Activated T-helper 2 cell treated with anti-CD3 and anti-CD28 coated beads, Interferon-gamma antibody, Interleukin-2, Interleukin-4, amounts not matched to agents 10 μg/mL and 5 μg/mL and 100 μg/mL, durations not matched to agents 14 hours and 24 hours and 36 hours (primary cell): ENCODE measurements at regions of chr14 and their contacts with region 1.

Region 1: GRCh38 chr14:72049455-72049854 is 117.2 kb downstream of the RGS6 start:
- DNase-seq: peak; percentile 48
- H3K4me3 Mint-ChIP-seq: no peak overlapping the region
- H3K27ac Mint-ChIP-seq: peak overlapping the region; percentile 72
- H3K4me1 Mint-ChIP-seq: peaks cover 34% of the 10 kb centered on the region
- H3K27me3 Mint-ChIP-seq: peaks cover 15% of the 10 kb centered on the region

Region 2: GRCh38 chr14:71932220-71932981 is 117.1 kb before region 1 on chr14 and contains the start of gene RGS6:
- intact Hi-C with region 1: loop called (anchors 2 kb)
- DNase-seq: peak; percentile 10
- H3K4me3 Mint-ChIP-seq: peak within 1 kb of the TSS; percentile 74
- H3K27ac Mint-ChIP-seq: peak within 1 kb of the TSS; percentile 80
- H3K4me1 Mint-ChIP-seq: peaks cover 15% of the 10 kb centered on the region
- H3K27me3 Mint-ChIP-seq: peaks cover 55% of the 10 kb centered on the region
- total RNA-seq, gene RGS6: 2.8 and 3.7 TPM in 2 replicates

Region 3: GRCh38 chr14:72000907-72001306 is 48.5 kb before region 1 on chr14:
- intact Hi-C with region 1: loop called (anchors 2 kb)
- DNase-seq: no peak
- H3K4me3 Mint-ChIP-seq: no peak overlapping the region
- H3K27ac Mint-ChIP-seq: no peak overlapping the region
- H3K4me1 Mint-ChIP-seq: peaks cover 1% of the 10 kb centered on the region
- H3K27me3 Mint-ChIP-seq: peaks cover 2% of the 10 kb centered on the region

Region 4: GRCh38 chr14:72063761-72064282 is 14.4 kb after region 1 on chr14:
- intact Hi-C with region 1: loop called (anchors 1 kb)
- DNase-seq: no peak
- H3K4me3 Mint-ChIP-seq: peak overlapping the region; percentile 4
- H3K27ac Mint-ChIP-seq: peak overlapping the region; percentile 29
- H3K4me1 Mint-ChIP-seq: peaks cover 20% of the 10 kb centered on the region
- H3K27me3 Mint-ChIP-seq: peaks cover 20% of the 10 kb centered on the region

Region 5: DNA sequence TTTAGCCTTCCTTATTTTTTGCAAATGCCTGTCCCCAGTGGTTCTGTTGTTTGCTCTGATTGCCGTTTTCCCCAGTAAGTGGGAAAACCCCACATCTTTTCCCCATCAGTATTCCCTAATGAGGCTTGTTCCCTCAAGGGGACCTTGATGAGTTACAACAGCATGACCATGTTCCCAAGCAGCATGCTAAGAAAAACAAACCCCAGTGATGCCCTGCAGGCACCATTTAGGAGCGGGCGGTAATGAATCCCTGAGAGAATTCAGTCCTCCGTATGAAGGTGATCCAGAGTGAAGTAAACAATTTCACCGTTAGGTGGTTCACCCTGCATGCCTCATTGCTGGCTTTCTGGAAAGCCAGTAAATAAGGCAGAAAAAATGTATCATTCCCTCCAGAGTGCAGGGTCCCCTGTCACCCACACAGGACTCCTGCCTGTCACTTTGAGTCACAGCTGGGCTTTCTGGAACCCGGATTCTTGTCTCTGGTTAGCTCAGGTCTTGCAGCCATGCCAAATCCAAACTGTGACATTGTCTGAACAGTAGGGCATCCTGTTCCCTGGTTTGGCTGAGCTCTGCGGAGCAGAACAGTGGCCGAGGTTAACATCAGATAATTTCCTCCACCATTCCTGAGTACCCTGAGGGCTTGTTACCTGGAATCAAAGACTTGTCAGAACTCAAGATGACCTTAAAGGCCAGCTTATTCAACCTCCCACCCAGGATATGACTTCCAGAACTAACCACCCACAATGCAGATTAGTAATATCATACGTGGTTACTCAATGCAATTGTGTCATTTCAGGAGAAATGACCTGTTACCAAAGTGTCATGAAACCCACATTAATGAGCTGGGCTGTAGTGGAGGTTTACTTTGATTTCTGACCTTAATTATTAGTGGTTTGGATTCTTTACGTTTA is 105.5 kb after region 1 on chr14:
- intact Hi-C with region 1: loop called (anchors 2 kb)
- DNase-seq: no peak
- H3K4me3 Mint-ChIP-seq: no peak overlapping the region
- H3K27ac Mint-ChIP-seq: no peak overlapping the region
- H3K4me1 Mint-ChIP-seq: peaks cover 8% of the 10 kb centered on the region
- H3K27me3 Mint-ChIP-seq: peaks cover 22% of the 10 kb centered on the region

Region 6: DNA sequence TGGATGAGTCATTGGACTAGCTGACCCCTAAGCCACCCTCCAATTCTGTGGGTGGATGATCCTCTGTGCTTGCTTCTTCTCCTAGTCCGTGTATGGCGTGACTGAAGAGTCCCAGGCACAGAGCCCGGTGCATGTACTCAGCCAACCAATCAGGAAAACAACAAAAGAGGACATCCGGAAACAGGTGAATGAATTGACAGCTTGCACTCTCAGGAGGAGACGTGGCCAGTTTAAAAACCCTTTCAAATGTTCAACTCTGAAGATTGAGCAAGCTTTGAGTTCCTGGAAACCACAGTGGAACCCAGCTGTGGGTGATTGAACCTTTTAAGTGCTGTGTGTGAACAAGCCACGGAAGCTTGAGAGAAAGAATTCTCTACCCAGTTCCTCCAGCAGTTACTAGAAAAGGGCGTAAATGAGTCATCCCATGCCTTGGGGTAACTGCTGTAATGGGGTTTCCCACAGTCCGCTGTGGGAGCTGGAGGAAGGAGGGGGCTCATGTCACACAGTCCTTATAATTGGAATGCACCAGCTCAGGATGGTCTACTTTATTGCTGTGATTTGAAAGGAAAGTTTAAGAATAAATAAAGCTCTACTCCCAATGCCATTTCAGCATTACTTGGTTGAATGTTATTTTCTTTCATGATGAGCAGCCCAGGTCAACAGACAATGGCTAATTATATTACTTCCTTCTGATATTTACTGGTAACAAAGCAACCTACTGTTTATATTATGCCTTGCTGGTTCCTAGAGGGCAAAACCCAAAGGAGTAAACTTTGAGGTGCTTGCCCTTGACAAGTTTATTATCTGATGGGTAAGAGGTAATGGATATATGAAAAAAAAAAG is 427.4 kb after region 1 on chr14:
- intact Hi-C with region 1: loop called (anchors 2 kb)
- DNase-seq: peak; percentile 80
- H3K4me3 Mint-ChIP-seq: peak overlapping the region; percentile 35
- H3K27ac Mint-ChIP-seq: peak overlapping the region; percentile 73
- H3K4me1 Mint-ChIP-seq: peaks cover 69% of the 10 kb centered on the region
- H3K27me3 Mint-ChIP-seq: peaks cover 5% of the 10 kb centered on the region